Esophagus squamous epithelium (tissue), 5 donors: ENCODE measurements at regions of chr4 and their contacts with region 1.

Region 1: GRCh38 chr4:39134683-39135319 is 47.5 kb upstream of the WDR19 start:
- DNase-seq: no peak
- H3K4me3 ChIP-seq: peak overlapping the region in 1 of 4 donors; percentile 15
- H3K27ac ChIP-seq: no peak overlapping the region
- H3K4me1 ChIP-seq: peaks cover 0 to 8% (median 8%) of the 10 kb centered on the region in 3 donors
- H3K27me3 ChIP-seq: no peaks in the 10 kb centered on the region
- CTCF ChIP-seq: no peak
- POLR2A ChIP-seq: no peak

Region 2: GRCh38 chr4:38902695-38903094 is 232.1 kb before region 1 on chr4:
- intact Hi-C with region 1: loop called (anchors 5 kb)
- DNase-seq: no peak
- H3K4me3 ChIP-seq: no peak overlapping the region
- H3K27ac ChIP-seq: no peak overlapping the region
- H3K4me1 ChIP-seq: no peaks in the 10 kb centered on the region
- H3K27me3 ChIP-seq: no peaks in the 10 kb centered on the region
- CTCF ChIP-seq: peak; percentile 4 to 46 (median 31)
- POLR2A ChIP-seq: no peak